WTC11 (cell line): ENCODE measurements at regions of chr18 and their contacts with region 1.

Region 1: DNA sequence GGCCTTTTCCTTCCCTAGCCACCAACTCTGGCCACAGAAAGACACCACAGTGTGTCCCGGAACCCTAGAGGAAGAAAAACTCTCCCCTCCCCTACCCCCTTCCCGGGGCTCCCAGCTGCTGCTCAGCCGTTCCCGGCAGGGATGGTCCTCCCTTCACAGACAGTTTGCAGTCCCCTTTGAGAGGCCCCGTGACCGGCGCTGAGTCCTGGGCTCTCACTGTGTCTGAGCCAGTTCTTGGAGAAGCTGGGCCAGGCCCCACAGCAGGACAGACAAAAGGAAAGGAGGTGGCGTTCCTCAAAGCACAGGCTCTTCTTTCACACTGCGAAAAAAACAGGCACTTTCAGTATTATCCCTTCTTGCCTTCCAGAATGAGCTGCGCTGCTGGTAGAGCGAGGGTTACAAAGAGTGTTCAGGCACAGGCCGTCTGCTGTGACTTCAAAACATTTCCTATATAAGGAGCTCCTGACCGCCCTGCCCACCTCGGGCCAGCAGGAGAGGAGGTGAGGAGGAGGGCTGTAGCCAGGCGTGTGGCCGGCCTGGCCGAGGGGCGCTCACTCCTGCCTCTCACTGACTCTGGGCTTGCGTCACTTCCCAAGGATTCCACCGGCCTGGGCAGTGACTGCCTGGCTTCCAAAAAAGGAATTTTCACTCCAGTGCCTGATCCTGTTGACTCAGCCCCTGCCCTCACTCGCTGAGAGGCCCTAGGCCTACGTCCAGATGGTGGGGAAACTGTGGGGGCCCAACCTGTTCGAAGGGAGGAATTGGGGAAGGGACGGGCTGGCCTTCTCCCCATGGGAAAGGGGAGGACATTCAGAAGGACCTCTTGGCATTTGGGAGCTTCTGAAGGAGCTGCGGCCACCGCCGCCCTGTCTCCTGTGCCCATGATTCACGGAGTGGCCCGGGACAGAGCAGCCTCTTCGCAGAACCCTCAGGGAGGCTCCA is 24.9 kb downstream of the CIDEA start:
- DNase-seq: peak; percentile 71
- ATAC-seq: peak; percentile 93
- H3K4me3 Mint-ChIP-seq: no peak overlapping the region
- H3K27ac Mint-ChIP-seq: peak overlapping the region; percentile 36
- H3K4me1 Mint-ChIP-seq: peaks cover 25% of the 10 kb centered on the region
- H3K27me3 Mint-ChIP-seq: no peaks in the 10 kb centered on the region; the same call in 1 of the 2 replicates
- CTCF ChIP-seq: no peak

Region 2: GRCh38 chr18:12308386-12309100 is 29.5 kb after region 1 on chr18:
- CTCF ChIA-PET with region 1: interaction called, 11 read pairs
- POLR2A ChIA-PET with region 1: interaction called, 4 read pairs
- DNase-seq: peak; percentile 67
- ATAC-seq: peak; percentile 33
- H3K4me3 Mint-ChIP-seq: peak overlapping the region; percentile 79
- H3K27ac Mint-ChIP-seq: no peak overlapping the region
- H3K4me1 Mint-ChIP-seq: peaks cover 49% of the 10 kb centered on the region
- H3K27me3 Mint-ChIP-seq: peaks cover 20% of the 10 kb centered on the region
- CTCF ChIP-seq: no peak

Region 3: DNA sequence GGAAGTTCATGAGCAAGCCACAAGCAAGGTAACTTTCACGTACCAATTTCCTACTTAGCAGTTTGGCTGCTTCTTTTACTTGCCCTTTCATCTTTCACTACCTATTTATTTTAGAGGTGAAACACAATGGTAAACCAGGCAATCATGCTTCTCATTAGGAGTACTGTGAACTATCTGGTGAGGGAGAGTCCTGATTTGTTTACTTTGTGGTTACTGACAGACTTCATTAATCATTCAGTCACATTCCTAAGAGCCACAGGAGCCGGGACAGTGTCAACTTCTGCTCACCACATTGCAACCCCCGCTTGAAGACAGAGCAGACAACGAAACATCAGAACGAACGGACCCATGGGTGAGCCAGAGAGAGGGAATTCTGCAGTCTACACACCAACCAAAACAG is 57.9 kb after region 1 on chr18:
- CTCF ChIA-PET with region 1: interaction called, 19 read pairs
- POLR2A ChIA-PET with region 1: no interaction called
- DNase-seq: no peak
- ATAC-seq: no peak
- H3K4me3 Mint-ChIP-seq: peak overlapping the region; percentile 35
- H3K27ac Mint-ChIP-seq: peak overlapping the region; percentile 92
- H3K4me1 Mint-ChIP-seq: peaks cover 58% of the 10 kb centered on the region
- H3K27me3 Mint-ChIP-seq: no peaks in the 10 kb centered on the region
- CTCF ChIP-seq: no peak